ENCODE measurements at regions of chr2 and their contacts with region 1.

Region 1: GRCh38 chr2:169479257-169480078 is at the start of gene BBS5:
- DNase-seq: peak; percentile 92
- H3K4me3 Mint-ChIP-seq: peak within 1 kb of the TSS; percentile 90
- H3K27ac Mint-ChIP-seq: peak within 1 kb of the TSS; percentile 61
- H3K4me1 Mint-ChIP-seq: peaks cover 5% of the 10 kb centered on the region
- H3K27me3 Mint-ChIP-seq: no peaks in the 10 kb centered on the region
- total RNA-seq, gene BBS5: 4.3 and 4.7 TPM in 2 replicates

Region 2: GRCh38 chr2:169363560-169364150 is 115.8 kb before region 1 on chr2:
- intact Hi-C with region 1: loop called (anchors 5 kb)
- DNase-seq: peak; percentile 86
- H3K4me3 Mint-ChIP-seq: peak overlapping the region; percentile 85
- H3K27ac Mint-ChIP-seq: peak overlapping the region; percentile 93
- H3K4me1 Mint-ChIP-seq: peaks cover 34% of the 10 kb centered on the region
- H3K27me3 Mint-ChIP-seq: peaks cover 53% of the 10 kb centered on the region

Region 3: DNA sequence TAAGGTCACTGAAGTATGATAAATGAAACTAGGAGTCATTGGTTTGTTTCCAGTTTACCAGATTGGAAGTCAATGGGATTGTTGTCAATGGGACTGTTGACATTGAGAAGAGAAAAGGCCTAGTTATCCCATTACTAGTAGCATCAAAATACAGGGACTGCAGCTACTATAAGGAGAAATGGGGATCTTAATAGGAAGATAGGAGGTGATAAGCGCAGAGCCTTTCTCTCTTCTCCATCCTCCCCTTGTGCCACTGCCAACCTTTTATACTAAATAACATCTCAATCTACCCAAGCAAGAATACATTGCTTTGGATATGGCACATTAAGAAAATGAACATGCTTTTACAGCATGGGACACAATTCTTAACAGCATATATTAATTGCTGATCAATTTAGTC is 10.6 kb before region 1 on chr2:
- intact Hi-C with region 1: loop called (anchors 1 kb)
- DNase-seq: no peak
- H3K4me3 Mint-ChIP-seq: no peak overlapping the region
- H3K27ac Mint-ChIP-seq: no peak overlapping the region
- H3K4me1 Mint-ChIP-seq: no peaks in the 10 kb centered on the region
- H3K27me3 Mint-ChIP-seq: peaks cover 7% of the 10 kb centered on the region

Region 4: DNA sequence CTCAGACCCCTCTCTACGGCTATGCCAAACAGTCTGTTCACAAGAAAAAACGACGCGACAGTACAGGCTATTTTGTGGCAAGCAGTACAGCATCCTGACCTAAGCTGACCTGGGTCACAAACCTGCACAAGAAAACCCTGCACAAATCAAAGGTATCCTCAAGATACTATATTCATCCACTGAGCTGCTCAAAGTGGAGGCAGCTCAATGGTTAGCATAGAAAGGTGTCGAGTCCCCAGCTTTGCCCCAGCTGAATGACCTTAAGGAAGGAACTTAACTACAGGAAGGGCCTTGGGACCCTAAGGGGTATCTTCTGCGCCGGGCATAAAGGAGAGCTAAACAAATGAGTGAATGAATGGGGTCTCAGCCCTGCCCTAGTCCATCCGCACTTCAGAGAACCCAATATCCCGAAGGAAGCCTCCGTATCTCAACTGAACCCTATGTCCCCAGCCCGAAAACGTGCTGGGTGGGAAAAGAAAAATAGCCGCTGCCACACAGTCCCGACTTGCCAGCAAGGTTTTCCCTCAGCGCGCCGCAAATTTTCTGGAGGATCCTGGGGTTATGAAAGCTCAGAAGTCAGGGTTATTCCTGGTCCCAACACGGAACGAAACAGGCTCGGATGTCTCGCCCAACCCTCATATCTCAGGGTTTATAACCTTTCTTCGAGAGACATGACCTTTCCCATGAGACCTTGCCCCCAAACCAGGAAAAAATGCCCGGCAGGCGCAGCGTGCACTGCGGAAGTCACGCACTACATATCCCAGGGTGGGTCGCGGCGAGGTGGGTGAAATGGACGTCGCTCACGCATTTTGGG is 93.9 kb after region 1 on chr2 and contains the start of gene FASTKD1:
- intact Hi-C with region 1: loop called (anchors 5 kb)
- DNase-seq: peak; percentile 95
- H3K4me3 Mint-ChIP-seq: peak within 1 kb of the TSS; percentile 94
- H3K27ac Mint-ChIP-seq: peak within 1 kb of the TSS; percentile 90
- H3K4me1 Mint-ChIP-seq: peaks cover 13% of the 10 kb centered on the region
- H3K27me3 Mint-ChIP-seq: peaks cover 2% of the 10 kb centered on the region
- total RNA-seq, gene FASTKD1: 55.2 and 56.5 TPM in 2 replicates

Measured in activated CD4-positive, alpha-beta T cell treated with anti-CD3 and anti-CD28 coated beads, Interleukin-2, amount 10 ng/mL, durations not matched to agents 24 days and 14 days (primary cell).